ENCODE measurements at regions of chr10 and their contacts with region 1.

Region 1: DNA sequence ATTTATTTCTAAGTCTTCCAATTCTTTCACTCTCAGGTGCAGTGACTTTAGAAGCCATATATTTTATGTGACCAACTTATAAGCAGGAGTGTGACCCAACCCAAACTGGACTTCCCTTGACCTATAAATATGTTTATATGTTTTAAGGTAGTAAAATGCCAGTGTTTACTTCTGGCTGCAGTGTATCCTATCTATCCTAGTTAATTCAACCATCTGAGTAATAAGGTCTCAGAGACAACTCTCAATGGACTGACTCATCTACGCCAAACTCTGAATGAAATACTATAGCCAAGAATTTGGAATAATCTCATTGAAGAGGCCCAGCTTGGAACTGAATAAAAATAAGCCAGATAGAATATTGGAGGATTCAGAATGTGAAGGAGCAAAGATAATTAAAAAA is 544.5 kb upstream of the SORCS1 start:
- DNase-seq: peak; percentile 57
- ATAC-seq: peak; percentile 99
- H3K4me3 ChIP-seq: no peak overlapping the region
- H3K27ac ChIP-seq: no peak overlapping the region
- H3K4me1 ChIP-seq: peaks cover 5% of the 10 kb centered on the region; the same call in 1 of the 2 replicates
- H3K27me3 ChIP-seq: no peaks in the 10 kb centered on the region
- CTCF ChIP-seq: no peak

Region 2: DNA sequence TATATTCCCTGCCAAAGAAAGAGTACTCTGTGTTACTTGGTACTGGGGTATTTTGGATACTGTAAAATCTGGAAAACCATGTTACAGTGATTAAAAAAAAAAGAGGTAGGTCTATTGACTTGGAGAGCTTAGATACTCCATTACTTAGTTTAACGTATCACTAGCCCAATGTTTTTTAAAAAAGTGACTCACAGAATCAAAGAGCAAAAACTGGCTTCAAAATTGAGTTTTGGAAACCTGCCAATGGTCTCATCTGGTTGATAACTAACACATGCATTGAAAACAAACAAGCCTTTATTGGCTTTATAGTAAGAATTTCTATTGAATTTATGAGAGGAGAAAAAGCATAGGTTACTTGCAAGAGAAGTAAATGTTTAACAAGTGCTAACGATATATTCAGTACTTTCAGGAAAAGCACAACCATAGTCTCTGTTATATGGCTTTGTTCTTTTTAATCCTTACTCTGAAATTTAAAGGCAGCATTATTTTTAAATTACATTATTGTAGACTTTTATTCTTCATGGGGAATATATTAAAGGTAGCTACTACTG is 18.9 kb after region 1 on chr10:
- CTCF ChIA-PET with region 1: no interaction called
- POLR2A ChIA-PET with region 1: no interaction called
- intact Hi-C with region 1: loop called (anchors 2 kb)
- DNase-seq: peak; percentile 48
- ATAC-seq: no peak
- H3K4me3 ChIP-seq: no peak overlapping the region
- H3K27ac ChIP-seq: no peak overlapping the region
- H3K4me1 ChIP-seq: peaks cover 34% of the 10 kb centered on the region
- H3K27me3 ChIP-seq: no peaks in the 10 kb centered on the region
- CTCF ChIP-seq: no peak

Measured in PC-3 (cell line).